HepG2 (cell line): ENCODE measurements at regions of chr5 and their contacts with region 1.

Region 1: DNA sequence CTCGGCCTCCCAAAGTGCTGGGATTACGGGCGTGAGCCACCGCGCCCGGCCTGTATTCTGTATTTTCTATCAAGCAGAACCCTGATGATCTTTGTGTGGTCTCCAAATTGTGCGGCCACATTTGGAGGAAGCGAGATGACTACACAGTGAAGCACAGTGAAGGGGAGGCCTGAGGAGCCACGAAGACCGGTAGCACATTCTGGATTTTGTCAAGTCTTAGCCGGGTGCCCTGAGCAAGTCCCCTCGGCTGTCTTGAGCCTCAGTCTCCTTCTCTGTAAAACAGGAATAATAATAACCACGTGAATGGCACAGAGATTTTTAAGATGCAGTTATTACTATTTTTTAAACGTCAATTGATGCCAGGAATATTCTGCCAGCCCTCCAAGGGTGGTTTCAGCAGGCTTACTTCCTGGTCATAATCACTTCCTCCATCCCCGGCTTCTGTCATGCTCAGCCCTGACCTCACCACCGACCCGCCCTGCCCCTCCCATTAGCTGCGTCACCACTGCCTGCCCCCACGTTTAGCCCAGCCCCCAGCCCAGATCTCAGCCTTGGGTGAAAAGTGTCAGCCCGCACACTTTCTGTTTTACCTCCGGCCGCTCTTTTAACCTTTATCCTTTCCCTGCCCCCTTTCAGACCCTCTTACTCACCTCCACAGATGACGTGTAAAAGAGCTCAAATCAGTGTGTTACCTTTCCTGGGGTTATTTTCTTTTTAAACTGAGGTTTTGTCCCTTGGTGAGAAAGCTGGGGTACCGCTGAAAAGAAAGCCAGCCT is 27.0 kb upstream of the ERGIC1 start:
- DNase-seq: peak; percentile 80
- ATAC-seq: peak; percentile 95
- H3K4me3 ChIP-seq: peak overlapping the region; percentile 47 to 56 (median 50)
- H3K27ac ChIP-seq: peak overlapping the region; percentile 67
- H3K4me1 ChIP-seq: peaks cover 43% of the 10 kb centered on the region
- H3K27me3 ChIP-seq: no peaks in the 10 kb centered on the region
- CTCF ChIP-seq: no peak
- EP300 ChIP-seq: peak in 1 of 2 experiments; percentile 44; a peak in 1 of 4 replicates
- POLR2A ChIP-seq: peak; percentile 20 to 54; a peak in 2 of 4 replicates
- RAD21 ChIP-seq: no peak

Region 2: GRCh38 chr5:172788771-172789686 is 18.1 kb before region 1 on chr5:
- CTCF ChIA-PET with region 1: no interaction called
- POLR2A ChIA-PET with region 1: interaction called, 15 read pairs
- in situ Hi-C with region 1: no loop called
- intact Hi-C with region 1: no loop called
- DNase-seq: peak; percentile 85
- ATAC-seq: peak; percentile 82
- H3K4me3 ChIP-seq: peak overlapping the region; percentile 44 to 62 (median 45); a peak in 5 of 6 replicates
- H3K27ac ChIP-seq: peak overlapping the region; percentile 92
- H3K4me1 ChIP-seq: peaks cover 88% of the 10 kb centered on the region
- H3K27me3 ChIP-seq: no peaks in the 10 kb centered on the region
- CTCF ChIP-seq: peak; percentile 21; the same call in 1 of the 2 replicates
- EP300 ChIP-seq: no peak
- POLR2A ChIP-seq: peak in 1 of 2 experiments; percentile 66; a peak in 3 of 4 replicates
- RAD21 ChIP-seq: 0 out of 2 replicates have a peak, but pooled peaks have one; percentile 4

Region 3: DNA sequence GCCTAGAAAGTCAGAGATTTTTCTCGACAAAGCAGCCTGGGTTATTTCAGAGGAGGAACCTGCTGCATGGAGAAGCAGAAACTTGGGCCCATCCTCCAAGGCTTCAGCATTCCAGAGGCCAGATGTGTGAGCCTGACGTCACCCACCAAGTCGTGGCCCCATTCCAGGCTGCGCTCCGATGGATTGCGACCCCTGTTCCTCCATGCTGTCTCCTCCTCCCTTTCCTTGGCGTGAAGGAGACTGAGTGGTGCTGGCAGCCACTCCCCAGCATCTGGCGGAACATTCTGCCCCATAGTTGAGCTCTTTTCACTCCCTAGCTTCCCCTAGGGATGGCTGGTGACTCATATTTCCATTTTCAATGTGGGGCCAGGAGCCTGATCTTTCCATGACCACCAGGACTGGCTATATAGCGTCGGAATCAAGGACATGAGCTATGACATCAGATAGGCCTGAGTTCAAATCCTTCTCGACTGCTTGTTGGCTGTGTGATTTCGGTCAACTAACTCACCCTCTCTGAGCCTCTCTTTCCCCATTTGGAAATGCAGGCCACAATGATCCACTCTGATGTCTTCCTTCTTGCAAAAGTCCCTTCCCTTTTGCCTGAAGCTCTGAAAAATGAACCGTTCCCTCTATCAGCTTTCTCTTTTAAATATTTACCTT is 11.6 kb before region 1 on chr5:
- CTCF ChIA-PET with region 1: no interaction called
- POLR2A ChIA-PET with region 1: interaction called, 10 read pairs
- in situ Hi-C with region 1: no loop called
- intact Hi-C with region 1: no loop called
- DNase-seq: no peak
- ATAC-seq: no peak
- H3K4me3 ChIP-seq: no peak overlapping the region
- H3K27ac ChIP-seq: no peak overlapping the region
- H3K4me1 ChIP-seq: peaks cover 97% of the 10 kb centered on the region
- H3K27me3 ChIP-seq: no peaks in the 10 kb centered on the region
- CTCF ChIP-seq: no peak
- EP300 ChIP-seq: no peak
- POLR2A ChIP-seq: no peak
- RAD21 ChIP-seq: no peak